Left cardiac atrium (tissue), 4 donors: ENCODE measurements at regions of chr13 and their contacts with region 1.

Region 1: GRCh38 chr13:26946684-26947343 is 186.2 kb upstream of the GPR12 start:
- DNase-seq: no peak
- ATAC-seq: peak; percentile 78 to 80

Region 2: DNA sequence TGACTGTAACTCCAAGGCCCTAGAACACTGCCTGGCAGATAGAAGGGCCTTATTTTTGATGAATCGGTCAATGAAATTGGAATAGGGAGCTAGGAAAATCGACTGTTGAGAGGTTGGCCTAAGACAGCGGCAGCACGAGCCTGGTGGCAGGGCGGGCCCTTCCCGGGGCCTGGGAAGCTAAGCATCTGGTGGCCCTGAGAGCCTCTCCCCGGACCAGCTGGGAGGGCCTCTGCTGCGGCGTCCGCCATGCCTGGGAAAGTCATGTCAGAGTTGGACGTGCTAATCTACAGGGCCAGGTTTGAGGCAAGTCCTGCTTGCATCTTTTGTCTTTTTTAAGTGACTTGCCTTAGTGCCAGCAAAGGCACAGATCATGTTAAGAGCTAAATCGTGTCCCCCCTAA is 175.0 kb before region 1 on chr13:
- intact Hi-C with region 1: no loop called
- DNase-seq: no peak
- ATAC-seq: no peak

Region 3: GRCh38 chr13:27362064-27362883 is 415.5 kb after region 1 on chr13:
- intact Hi-C with region 1: loop called (anchors 2 to 5 kb)
- DNase-seq: peak; percentile 89
- ATAC-seq: peak; percentile 96 to 97